Posterior vena cava (tissue), 2 donors: ENCODE measurements at regions of chr3 and their contacts with region 1.

Region 1: DNA sequence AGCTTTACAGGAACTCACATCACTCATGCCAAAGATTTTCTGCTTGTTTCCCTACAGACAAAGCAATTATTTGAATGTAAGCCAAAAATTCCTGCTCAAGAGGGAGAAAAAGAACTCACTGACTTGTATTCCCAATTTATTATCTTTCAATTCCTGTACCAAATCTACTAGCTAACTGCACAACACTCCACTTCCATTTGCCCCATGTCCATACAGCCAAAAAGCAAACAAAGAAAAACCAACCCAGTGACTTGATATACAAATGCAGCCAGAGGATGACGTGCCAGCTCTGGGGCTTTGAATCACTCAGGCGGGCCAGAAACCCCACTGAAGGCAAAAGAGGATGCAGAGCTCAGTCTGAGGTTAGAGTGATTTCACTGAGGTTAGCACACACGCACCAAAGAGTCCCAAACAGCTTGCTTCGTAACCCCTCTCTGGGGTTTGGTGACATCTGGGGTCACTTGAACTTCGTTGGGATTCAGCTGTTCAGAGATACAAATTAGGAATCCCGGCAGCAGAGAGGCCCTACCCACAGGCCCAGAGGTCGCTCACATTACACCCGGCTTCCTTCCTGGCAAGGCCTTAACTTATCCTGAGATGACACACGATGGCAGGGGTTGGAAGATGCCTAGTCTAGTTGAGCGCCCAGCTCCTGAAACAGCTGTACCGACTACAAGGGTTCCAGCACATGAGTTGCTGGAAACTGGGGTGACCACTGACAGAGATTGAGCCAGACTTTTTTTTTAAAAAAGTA is 1.6 kb downstream of the RFTN1 start:
- DNase-seq: peak; percentile 91

Region 2: DNA sequence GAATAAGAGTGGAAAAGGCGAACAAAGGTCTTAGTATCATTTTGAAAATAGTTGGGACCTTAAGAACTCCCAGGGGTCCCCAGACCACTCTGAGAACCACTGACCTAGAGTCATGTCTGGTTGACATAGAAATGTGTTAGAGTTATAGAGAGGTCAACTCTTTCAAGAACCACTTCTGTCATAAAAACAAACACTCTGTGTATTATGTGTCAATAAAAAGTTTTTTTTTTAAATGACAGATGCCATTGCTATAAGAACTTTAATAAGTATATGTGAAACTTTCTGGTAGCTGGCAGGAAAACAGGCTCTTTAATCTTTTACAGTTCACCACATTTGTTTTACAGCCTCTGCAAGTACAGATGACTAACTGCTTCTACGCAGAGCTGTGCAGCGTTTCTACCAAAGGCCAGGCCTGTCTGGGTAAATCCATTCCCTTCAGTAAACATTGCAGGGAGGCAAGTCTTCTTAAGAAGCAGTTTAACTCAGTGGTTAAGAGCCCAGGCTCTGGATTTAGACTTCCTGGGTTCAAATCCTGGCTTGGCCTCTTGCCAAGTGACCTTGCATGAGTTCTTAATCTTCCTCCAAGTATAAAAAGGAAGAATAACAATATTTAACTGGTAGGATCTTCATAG is 55.0 kb before region 1 on chr3:
- intact Hi-C with region 1: no loop called
- DNase-seq: no peak

Region 3: DNA sequence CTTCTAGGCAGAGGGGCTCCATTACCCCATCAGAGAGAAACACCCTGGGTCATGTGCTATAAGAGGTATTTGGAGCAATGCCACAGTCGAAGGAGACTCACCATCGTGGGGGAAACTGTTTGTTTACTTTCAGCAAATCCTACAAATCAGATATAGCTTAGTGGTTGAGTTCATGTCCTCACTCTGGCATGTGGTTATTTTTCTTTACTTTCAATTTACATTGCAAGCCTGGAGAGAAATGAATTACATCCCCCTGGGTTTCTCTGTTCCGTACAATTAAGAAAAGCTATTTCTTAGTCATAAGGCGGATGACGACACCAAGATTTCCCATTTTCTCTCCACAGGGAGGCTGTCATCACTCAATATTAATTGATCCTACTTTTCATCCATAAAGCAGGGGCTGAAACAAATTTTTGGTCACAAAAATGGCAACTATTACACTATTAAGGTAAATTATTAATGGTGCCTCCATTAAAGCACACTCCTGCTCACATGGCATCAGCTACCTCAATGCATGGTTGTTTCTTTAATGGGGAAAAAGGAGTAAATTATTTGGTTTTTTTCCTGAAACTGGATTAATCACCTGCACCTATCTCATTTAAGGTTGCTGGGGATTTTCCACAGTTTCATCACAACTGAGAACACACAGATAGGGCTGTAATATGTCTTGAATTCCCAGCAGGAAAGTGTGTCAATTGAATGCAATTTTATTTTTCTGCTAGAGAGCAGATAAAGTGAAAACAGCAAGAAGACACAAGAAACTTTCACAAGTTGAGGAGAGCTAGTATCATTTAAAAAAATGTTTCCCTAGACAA is 35.0 kb before region 1 on chr3:
- intact Hi-C with region 1: loop called in 1 of 2 experiments (anchors 5 kb)
- DNase-seq: no peak